ENCODE measurements at regions of chr4 and their contacts with region 1.

Region 1: DNA sequence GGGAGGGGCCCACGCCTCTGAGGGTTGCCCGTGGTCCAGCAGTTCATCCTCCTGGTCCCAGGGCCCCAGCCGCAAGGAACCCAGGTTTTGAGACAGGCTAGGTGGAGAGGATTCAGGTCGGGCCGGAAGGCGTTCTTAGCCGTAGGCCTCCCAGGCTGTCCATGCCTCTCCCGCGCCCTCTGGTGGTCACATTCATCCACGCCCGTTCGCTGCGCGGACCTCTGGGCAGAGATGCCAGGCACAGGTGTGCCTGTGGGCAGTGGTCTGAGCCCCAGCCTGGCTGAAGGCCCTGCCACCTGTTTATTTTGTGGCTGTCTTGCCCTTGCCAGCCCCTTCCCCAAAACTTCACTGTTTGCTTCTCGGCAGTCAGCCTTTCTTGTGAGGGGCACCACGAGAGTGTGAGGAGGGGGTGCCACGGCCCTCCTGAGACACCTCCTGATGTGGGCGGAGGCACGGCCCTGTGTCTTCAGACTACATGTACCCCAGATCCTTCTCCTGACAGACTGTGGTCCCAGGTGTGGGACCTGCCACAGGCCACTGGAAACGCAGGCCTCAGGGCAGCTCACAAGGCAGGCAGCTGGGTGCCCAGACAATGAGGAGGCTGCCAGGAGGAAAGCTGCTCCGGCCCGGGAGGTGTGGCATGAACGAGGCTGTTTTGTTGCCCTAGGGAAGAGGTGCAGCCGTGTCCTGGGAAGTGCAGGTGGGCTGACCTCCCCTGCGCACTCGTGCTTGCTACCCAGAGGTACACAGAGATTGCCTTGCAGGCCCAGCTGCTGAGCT is 5.0 kb downstream of the UVSSA start:
- DNase-seq: peak; percentile 71 to 80 (median 78)
- H3K4me3 ChIP-seq: no peak overlapping the region
- H3K4me3 Mint-ChIP-seq: peak overlapping the region; percentile 31 to 64
- H3K27ac ChIP-seq: no peak overlapping the region
- H3K27ac Mint-ChIP-seq: peak overlapping the region in 4 of 7 donors; percentile 26 to 89 (median 83)
- H3K4me1 ChIP-seq: peaks cover 14 to 17% of the 10 kb centered on the region in 2 donors
- H3K4me1 Mint-ChIP-seq: peaks cover 20% of the 10 kb centered on the region
- H3K27me3 ChIP-seq: no peaks in the 10 kb centered on the region
- H3K27me3 Mint-ChIP-seq: peaks cover 0 to 2% (median 0%) of the 10 kb centered on the region in 3 donors
- CTCF ChIP-seq: peak; percentile 97

Region 2: GRCh38 chr4:1072830-1073446 is 279.1 kb before region 1 on chr4:
- intact Hi-C with region 1: no loop called
- DNase-seq: peak; percentile 52 to 69 (median 61)
- H3K4me3 ChIP-seq: no peak overlapping the region
- H3K4me3 Mint-ChIP-seq: no peak overlapping the region
- H3K27ac ChIP-seq: no peak overlapping the region
- H3K27ac Mint-ChIP-seq: peak overlapping the region in 3 of 7 donors; percentile 4 to 24 (median 5)
- H3K4me1 ChIP-seq: no peaks in the 10 kb centered on the region
- H3K4me1 Mint-ChIP-seq: peaks cover 6% of the 10 kb centered on the region
- H3K27me3 ChIP-seq: no peaks in the 10 kb centered on the region
- H3K27me3 Mint-ChIP-seq: peaks cover 10 to 27% (median 14%) of the 10 kb centered on the region in 3 donors
- CTCF ChIP-seq: peak; percentile 82

Region 3: DNA sequence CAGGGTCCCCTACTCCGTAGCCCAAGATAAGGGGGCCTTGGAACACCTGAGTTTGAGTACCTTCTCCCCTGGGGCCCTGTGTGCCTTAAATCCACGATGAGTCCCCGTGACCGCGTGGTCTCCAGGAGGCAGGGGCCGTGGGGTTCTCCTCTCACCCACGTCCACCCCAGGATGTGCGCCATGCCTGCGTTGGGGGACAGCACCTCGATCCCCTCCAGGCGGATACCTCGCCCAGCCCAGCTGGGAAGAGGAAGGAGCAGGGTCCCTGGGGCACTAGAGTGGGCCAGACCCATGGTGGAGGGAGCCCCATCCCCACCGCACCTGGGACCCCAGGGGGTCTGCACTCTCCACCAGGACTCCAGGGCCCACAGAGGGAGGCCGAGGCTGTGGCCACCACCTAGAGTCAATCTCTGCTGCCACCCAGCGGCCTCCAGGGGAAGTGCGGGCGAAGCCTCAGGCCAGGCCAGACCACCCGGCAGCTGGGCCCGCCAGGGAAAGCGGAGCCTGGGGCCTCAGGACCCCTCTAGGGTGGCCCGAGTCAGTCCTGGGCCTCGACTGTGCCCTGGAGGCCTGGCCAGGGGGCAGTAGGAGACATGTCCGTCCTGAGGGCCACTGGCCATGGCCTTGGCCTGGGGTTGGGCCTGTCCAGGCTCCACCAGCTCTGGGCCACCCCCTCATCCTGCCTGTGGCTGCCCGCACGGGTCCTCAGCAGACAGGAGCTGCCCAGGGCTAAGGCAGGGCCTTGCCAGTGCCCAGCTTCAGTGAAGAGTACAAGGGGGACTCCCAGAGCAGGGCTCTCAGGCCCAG is 277.1 kb after region 1 on chr4:
- intact Hi-C with region 1: loop called in 1 of 2 experiments (anchors 2 kb)
- DNase-seq: peak; percentile 25 to 47 (median 45)
- H3K4me3 ChIP-seq: no peak overlapping the region
- H3K4me3 Mint-ChIP-seq: no peak overlapping the region
- H3K27ac ChIP-seq: no peak overlapping the region
- H3K27ac Mint-ChIP-seq: no peak overlapping the region
- H3K4me1 ChIP-seq: no peaks in the 10 kb centered on the region
- H3K4me1 Mint-ChIP-seq: no peaks in the 10 kb centered on the region
- H3K27me3 ChIP-seq: no peaks in the 10 kb centered on the region
- H3K27me3 Mint-ChIP-seq: peaks cover 0 to 7% (median 2%) of the 10 kb centered on the region in 3 donors
- CTCF ChIP-seq: peak; percentile 100

Measured in CD14-positive monocyte (primary cell).